Activated CD4-positive, alpha-beta memory T cell treated with anti-CD3 and anti-CD28 coated beads, Interleukin-2, amount 10 ng/mL, durations not matched to agents 7 days and 5 days (primary cell): ENCODE measurements at regions of chr1 and their contacts with region 1.

Region 1: DNA sequence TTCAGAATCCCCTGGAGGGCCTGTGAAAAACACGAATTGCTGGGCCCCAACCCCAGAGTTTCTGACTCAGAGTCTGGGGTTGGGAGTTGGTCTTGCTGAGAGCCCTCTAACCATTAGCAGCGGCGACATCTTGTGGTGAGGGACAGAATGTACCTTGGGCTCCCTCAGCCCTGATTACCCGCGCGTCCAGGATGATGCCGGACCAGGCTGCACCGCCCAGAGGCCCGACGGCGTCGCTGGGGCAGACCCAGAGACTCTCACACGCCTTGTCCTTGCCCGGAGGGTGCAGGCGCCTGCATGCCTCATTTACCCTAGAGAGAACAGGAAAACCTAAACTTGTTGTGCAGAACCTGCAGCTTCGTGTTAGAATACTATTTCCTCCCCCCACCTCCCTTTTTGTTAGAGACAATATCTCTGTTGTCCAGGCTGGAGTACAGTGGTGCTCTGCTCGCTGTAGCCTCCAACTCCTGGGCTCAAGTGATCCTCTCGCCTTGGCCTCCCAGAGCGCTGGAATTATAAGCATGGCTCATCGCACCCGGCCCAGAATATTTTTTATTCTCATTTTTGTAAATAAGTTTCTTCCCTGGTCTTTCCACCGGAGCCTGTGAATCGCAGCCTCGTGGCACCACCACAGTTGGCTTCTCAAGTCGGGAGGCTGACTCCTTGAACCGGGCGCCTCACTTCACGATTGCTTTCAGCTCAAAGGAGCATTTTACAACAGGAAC is 22.2 kb upstream of the RD3 start:
- DNase-seq: peak; percentile 79
- H3K4me3 Mint-ChIP-seq: peak overlapping the region; percentile 40
- H3K27ac Mint-ChIP-seq: no peak overlapping the region
- H3K4me1 Mint-ChIP-seq: peaks cover 42% of the 10 kb centered on the region
- H3K27me3 Mint-ChIP-seq: peaks cover 3% of the 10 kb centered on the region

Region 2: GRCh38 chr1:211329764-211330201 is 184.4 kb before region 1 on chr1:
- CTCF ChIA-PET with region 1: interaction called, 55 read pairs
- POLR2A ChIA-PET with region 1: interaction called, 7 read pairs
- DNase-seq: no peak
- H3K4me3 Mint-ChIP-seq: peak overlapping the region; percentile 88
- H3K27ac Mint-ChIP-seq: peak overlapping the region; percentile 92
- H3K4me1 Mint-ChIP-seq: peaks cover 74% of the 10 kb centered on the region
- H3K27me3 Mint-ChIP-seq: no peaks in the 10 kb centered on the region

Region 3: GRCh38 chr1:211371406-211372105 is 142.6 kb before region 1 on chr1:
- CTCF ChIA-PET with region 1: no interaction called
- POLR2A ChIA-PET with region 1: no interaction called
- DNase-seq: no peak
- H3K4me3 Mint-ChIP-seq: no peak overlapping the region
- H3K27ac Mint-ChIP-seq: no peak overlapping the region
- H3K4me1 Mint-ChIP-seq: peaks cover 12% of the 10 kb centered on the region
- H3K27me3 Mint-ChIP-seq: no peaks in the 10 kb centered on the region

Region 4: GRCh38 chr1:211527006-211527405 is 12.8 kb after region 1 on chr1:
- CTCF ChIA-PET with region 1: interaction called, 18 read pairs
- POLR2A ChIA-PET with region 1: no interaction called
- DNase-seq: no peak
- H3K4me3 Mint-ChIP-seq: no peak overlapping the region
- H3K27ac Mint-ChIP-seq: no peak overlapping the region
- H3K4me1 Mint-ChIP-seq: peaks cover 7% of the 10 kb centered on the region
- H3K27me3 Mint-ChIP-seq: no peaks in the 10 kb centered on the region

Region 5: DNA sequence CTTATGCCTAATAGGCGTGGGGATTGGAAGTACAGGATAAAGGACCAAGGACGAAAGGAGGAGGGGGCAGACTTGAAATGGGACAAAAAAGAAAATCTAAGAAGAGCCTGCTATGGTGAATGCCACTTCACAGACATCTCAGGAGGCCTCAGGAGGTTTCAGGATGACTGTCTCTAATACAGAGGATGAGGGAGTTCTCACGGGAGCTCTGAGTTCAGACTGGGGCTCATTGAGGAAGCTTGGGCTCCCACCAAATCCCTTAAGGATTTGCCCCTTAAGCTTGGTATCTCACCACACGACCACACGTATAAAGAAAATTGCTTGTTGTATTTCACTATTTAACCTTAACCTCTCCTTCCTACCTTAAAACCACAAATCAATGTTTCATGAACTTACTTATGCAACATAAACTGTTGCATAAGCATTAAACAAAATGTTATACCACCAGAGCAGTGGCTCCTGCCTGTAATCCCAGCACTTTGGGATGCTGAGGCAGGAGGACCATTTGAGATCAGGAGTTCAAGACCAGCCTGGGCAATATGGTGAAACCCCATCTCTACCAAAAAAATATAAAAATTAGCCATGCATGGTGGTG is 52.3 kb after region 1 on chr1:
- CTCF ChIA-PET with region 1: no interaction called
- POLR2A ChIA-PET with region 1: no interaction called
- DNase-seq: no peak
- H3K4me3 Mint-ChIP-seq: no peak overlapping the region
- H3K27ac Mint-ChIP-seq: no peak overlapping the region
- H3K4me1 Mint-ChIP-seq: peaks cover 18% of the 10 kb centered on the region
- H3K27me3 Mint-ChIP-seq: no peaks in the 10 kb centered on the region

Region 6: DNA sequence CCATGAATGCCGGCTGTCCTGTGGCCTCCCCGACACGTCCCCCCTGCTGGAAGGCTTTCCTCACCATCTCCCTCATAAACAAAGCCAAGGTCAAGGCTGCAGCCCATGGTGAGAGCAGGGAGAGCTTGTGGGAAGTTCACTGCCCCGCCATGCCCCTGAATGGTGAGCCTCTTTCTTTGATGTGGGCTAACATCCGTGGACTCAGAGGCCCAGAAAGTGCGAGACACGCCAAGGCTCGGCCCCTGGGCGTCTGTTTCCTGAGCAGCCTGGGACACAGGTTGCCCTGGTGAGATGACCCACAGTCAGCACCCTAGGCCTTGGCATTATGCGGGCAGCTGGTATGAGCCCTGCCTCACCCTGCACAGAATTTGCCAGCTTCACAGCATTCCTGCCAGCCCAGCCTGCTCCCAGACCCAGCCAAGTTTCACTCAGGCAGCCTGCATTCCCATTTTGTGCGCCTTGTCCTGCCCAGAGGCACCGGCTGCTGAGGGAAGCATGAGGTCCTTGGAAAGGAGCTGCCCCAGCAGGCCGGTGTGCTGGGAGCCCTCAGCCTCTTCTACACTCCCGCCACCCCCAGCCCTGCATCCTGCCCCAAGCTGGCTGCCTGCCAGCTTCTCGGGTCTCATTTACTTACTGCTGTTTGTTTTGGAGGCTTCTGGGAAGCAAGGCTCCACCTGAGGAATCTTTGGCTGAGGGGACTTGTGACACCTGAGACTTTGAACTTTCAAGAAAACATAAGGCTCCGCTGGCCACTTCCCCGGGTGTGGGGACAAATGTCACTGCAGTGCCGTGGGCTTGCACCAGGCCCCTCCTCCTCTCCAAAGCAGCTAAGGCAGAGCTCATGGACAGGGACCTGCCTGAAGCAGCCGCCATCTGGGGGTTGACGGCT is 129.4 kb after region 1 on chr1:
- CTCF ChIA-PET with region 1: interaction called, 10 read pairs
- POLR2A ChIA-PET with region 1: no interaction called
- DNase-seq: peak; percentile 26
- H3K4me3 Mint-ChIP-seq: no peak overlapping the region
- H3K27ac Mint-ChIP-seq: no peak overlapping the region
- H3K4me1 Mint-ChIP-seq: peaks cover 9% of the 10 kb centered on the region
- H3K27me3 Mint-ChIP-seq: peaks cover 7% of the 10 kb centered on the region